CD14-positive monocyte (primary cell): ENCODE measurements at regions of chr2 and their contacts with region 1.

Region 1: GRCh38 chr2:127857265-127857808 is 618 bp downstream of the POLR2D start:
- DNase-seq: peak in 1 of 3 donors; percentile 11
- H3K4me3 ChIP-seq: peak overlapping the region; percentile 79 to 85 (median 83)
- H3K4me3 Mint-ChIP-seq: peak overlapping the region; percentile 82 to 95
- H3K27ac ChIP-seq: peak overlapping the region; percentile 34 to 87
- H3K27ac Mint-ChIP-seq: peak overlapping the region; percentile 84 to 92 (median 88)
- H3K4me1 ChIP-seq: peaks cover 18 to 32% of the 10 kb centered on the region in 2 donors
- H3K4me1 Mint-ChIP-seq: peaks cover 37% of the 10 kb centered on the region
- H3K27me3 ChIP-seq: no peaks in the 10 kb centered on the region
- H3K27me3 Mint-ChIP-seq: peaks cover 3 to 5% (median 4%) of the 10 kb centered on the region in 3 donors
- CTCF ChIP-seq: no peak

Region 2: DNA sequence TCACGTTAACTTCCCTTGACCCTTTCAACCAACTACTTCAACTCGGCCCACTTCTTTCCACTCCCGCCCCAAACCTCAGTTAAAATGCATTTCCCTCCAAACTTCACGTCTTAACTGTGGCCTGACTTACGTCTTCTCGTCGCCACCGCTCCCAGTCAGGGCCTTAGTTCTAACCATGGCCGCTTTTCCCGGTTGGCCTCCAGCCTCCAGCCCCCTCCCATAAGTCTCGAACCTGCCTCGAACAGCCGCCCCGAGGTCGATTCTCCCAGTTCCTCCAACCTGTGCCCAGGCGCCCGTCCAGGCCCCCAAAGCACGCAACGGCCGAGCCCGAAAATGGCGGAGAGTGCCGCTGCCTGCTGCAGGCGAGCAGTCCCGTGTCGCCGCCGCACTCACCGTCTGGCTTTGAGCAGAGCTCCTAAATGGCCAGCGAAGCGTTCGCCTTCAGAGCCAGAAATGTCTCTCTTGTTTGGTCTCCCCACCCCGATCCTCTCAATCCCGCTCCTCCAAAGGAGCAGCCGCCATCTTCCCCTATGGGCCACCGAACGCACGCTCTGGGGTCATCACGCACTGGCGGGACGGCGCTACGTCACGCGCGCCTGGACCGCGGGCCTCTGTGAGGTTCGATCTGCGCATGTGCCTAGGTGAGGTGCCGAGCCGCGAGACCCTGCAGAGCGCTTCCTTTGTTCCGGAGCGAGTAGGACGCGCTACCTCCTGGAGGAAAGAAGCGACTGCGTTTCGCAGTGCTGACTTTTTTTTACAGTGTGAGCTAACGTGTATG is 46.5 kb before region 1 on chr2 and contains the start of gene WDR33:
- intact Hi-C with region 1: loop called in 1 of 2 experiments (anchors 5 kb)
- DNase-seq: peak; percentile 78 to 89 (median 88)
- H3K4me3 ChIP-seq: peak within 1 kb of the TSS; percentile 89 to 95 (median 92)
- H3K4me3 Mint-ChIP-seq: peak within 1 kb of the TSS; percentile 97 to 100
- H3K27ac ChIP-seq: peak within 1 kb of the TSS; percentile 96 to 98
- H3K27ac Mint-ChIP-seq: peak within 1 kb of the TSS; percentile 98 to 100 (median 99)
- H3K4me1 ChIP-seq: peaks cover 21 to 22% of the 10 kb centered on the region in 2 donors
- H3K4me1 Mint-ChIP-seq: peaks cover 41% of the 10 kb centered on the region
- H3K27me3 ChIP-seq: no peaks in the 10 kb centered on the region
- H3K27me3 Mint-ChIP-seq: peaks cover 0 to 2% (median 1%) of the 10 kb centered on the region in 3 donors
- CTCF ChIP-seq: no peak
- polyA plus RNA-seq, gene WDR33: 12.5 to 19.6 (median 12.6) TPM

Region 3: GRCh38 chr2:127953128-127953718 is 95.9 kb after region 1 on chr2:
- intact Hi-C with region 1: loop called in 1 of 2 experiments (anchors 10 kb)
- DNase-seq: no peak
- H3K4me3 ChIP-seq: no peak overlapping the region
- H3K4me3 Mint-ChIP-seq: no peak overlapping the region
- H3K27ac ChIP-seq: no peak overlapping the region
- H3K27ac Mint-ChIP-seq: no peak overlapping the region
- H3K4me1 ChIP-seq: peaks cover 5 to 6% of the 10 kb centered on the region in 2 donors
- H3K4me1 Mint-ChIP-seq: peaks cover 10% of the 10 kb centered on the region
- H3K27me3 ChIP-seq: no peaks in the 10 kb centered on the region
- H3K27me3 Mint-ChIP-seq: no peaks in the 10 kb centered on the region
- CTCF ChIP-seq: no peak